Calu3 (cell line): ENCODE measurements at regions of chr14 and their contacts with region 1.

Region 1: GRCh38 chr14:98974082-98974481 is 297.9 kb downstream of the BCL11B start:
- DNase-seq: peak; percentile 50
- H3K4me3 Mint-ChIP-seq: no peak overlapping the region
- H3K27ac Mint-ChIP-seq: peak overlapping the region; percentile 68
- H3K4me1 Mint-ChIP-seq: peaks cover 26% of the 10 kb centered on the region
- H3K27me3 Mint-ChIP-seq: no peaks in the 10 kb centered on the region
- CTCF ChIP-seq: no peak

Region 2: DNA sequence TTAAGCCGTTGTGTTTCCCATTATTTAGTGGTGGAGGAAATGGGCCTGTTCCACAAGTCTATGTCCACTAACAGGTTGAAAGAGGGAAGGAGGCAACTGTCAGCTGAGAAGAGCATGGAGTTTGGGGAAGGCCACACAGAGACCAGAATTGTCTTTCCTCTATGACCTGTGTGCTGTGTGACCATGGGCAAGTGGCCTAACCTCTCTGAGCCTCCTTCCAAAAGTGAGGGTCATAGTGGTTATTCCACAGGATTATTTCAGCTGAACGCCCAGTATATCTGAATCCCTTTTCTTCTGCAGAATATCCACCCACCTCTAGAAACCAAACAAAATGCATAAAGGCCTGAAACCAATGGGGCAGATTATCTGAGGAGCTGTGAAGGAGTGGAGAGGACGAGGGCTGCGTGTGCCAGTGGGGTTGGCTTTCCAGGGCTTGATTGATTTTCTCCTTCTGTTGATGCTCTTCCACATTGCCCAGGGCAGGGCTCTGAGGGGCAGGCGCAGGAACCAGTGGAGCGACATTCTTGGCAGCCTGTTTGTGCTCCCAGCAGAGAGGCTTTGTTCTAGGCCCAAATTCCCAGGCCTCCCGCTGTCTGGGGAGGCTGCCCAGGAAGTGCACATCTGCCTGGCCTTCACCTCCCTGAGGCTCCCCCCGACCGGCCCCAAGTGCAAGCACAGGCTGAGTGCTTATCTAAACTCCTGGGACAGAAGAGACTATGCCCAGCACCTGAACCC is 154.8 kb before region 1 on chr14:
- CTCF ChIA-PET with region 1: no interaction called
- intact Hi-C with region 1: loop called (anchors 5 kb)
- DNase-seq: peak; percentile 78
- H3K4me3 Mint-ChIP-seq: peak overlapping the region; percentile 5
- H3K27ac Mint-ChIP-seq: peak overlapping the region; percentile 61
- H3K4me1 Mint-ChIP-seq: peaks cover 29% of the 10 kb centered on the region
- H3K27me3 Mint-ChIP-seq: peaks cover 23% of the 10 kb centered on the region
- CTCF ChIP-seq: no peak

Region 3: DNA sequence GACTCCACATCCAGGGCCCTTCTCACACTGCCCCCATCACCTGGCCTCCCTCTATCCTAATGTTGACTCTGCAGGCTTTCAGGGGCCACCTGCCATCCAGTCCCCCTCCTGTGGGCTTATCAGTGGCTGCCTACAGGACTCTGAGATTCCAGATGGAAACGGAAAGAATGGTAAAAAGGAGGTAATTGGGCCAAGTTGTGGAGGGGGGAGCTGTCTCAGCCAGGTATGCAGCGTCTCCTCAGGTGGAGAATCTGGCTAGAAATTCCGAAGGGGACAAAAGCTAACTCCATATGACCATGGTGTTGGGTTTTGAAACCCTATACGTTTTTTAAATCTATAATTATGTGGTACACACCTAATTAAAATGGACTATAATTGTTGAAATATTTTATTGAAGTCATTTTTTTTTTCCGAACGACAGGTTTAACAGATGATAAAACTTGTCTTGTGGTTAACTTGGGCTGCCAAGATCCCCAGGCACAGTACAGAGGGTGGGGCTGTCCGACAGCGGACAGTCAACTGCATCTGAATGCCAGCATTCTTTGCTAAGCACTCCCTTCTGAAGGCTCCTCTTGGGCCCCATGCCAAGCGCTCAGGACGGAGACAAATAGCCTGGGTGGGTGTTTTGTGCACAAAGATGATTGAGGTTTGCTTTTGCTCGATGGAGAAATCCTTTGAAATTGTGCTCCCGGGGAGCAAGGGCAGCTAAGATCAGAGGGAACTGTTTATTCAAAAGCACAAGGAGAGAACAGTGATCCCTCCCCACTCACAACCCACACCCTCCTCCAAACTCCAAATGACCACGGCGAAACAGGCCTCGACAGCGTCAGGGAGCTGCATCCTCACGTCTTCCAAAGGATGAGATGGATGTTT is 67.7 kb before region 1 on chr14:
- CTCF ChIA-PET with region 1: interaction called, 6 read pairs
- intact Hi-C with region 1: loop called (anchors 5 kb)
- DNase-seq: peak; percentile 67
- H3K4me3 Mint-ChIP-seq: no peak overlapping the region
- H3K27ac Mint-ChIP-seq: no peak overlapping the region
- H3K4me1 Mint-ChIP-seq: peaks cover 32% of the 10 kb centered on the region
- H3K27me3 Mint-ChIP-seq: peaks cover 21% of the 10 kb centered on the region
- CTCF ChIP-seq: no peak

Region 4: DNA sequence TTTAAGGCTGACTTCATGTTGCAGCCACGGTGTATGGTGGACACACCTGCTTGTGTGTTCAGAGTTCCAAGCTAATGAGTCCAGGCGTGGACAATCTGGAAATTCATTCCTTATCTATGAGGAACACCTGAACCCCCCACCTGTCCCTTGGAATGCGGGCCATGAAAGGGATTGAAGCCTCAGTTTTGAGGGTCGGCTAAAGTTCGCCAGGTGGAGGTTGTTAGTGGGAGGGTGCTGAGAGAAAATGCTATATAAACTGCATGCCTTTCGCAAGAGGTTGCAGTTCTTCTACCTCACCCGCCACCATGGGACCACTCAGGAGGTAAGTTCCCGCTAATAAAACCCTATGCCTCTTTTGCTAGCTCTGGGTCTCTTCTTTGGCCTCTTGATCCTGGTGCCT is 50.0 kb before region 1 on chr14:
- CTCF ChIA-PET with region 1: no interaction called
- intact Hi-C with region 1: loop called (anchors 1 kb)
- DNase-seq: no peak
- H3K4me3 Mint-ChIP-seq: no peak overlapping the region
- H3K27ac Mint-ChIP-seq: no peak overlapping the region
- H3K4me1 Mint-ChIP-seq: no peaks in the 10 kb centered on the region
- H3K27me3 Mint-ChIP-seq: peaks cover 50% of the 10 kb centered on the region
- CTCF ChIP-seq: no peak

Region 5: GRCh38 chr14:98993818-98994217 is 19.7 kb after region 1 on chr14:
- CTCF ChIA-PET with region 1: no interaction called
- intact Hi-C with region 1: no loop called
- DNase-seq: no peak
- H3K4me3 Mint-ChIP-seq: no peak overlapping the region
- H3K27ac Mint-ChIP-seq: no peak overlapping the region
- H3K4me1 Mint-ChIP-seq: peaks cover 11% of the 10 kb centered on the region
- H3K27me3 Mint-ChIP-seq: peaks cover 14% of the 10 kb centered on the region
- CTCF ChIP-seq: no peak

Region 6: DNA sequence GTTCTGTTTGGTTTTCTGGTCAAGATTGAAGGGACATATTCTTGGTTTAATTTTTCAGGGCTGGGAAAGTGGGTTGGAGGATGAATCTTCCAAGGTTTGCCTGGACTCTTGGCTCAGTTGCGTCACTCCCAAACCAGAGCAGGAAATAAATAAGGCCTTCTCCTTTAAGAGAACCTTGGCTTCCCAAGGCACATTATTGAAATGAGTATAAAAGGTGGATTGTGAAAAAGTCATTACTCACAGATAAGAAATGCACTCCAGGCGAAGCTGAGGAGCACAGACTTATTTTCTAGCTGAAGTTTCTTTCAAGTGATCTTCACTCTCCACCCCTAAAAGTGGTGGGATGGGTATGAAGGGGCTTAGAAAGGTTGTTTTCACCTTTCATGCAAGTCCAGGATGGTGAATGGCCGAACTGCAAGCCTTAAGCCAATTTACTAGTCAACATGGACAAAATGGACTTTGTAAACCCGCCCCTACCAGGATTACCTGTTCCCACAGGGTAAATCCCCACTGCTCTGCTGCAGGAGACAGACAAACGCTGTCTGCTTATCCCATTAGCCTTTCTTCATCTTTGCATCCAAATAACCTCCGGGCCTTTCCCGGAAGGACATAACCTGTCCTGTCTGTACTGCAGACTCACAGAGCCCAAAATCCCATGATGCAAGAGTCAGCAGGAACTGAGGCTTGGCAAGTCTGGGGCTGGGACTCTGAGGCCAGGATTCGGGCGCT is 90.3 kb after region 1 on chr14:
- CTCF ChIA-PET with region 1: no interaction called
- intact Hi-C with region 1: loop called (anchors 10 kb)
- DNase-seq: peak; percentile 32
- H3K4me3 Mint-ChIP-seq: peak overlapping the region; percentile 58
- H3K27ac Mint-ChIP-seq: peak overlapping the region; percentile 91
- H3K4me1 Mint-ChIP-seq: peaks cover 35% of the 10 kb centered on the region
- H3K27me3 Mint-ChIP-seq: no peaks in the 10 kb centered on the region
- CTCF ChIP-seq: no peak

Region 7: DNA sequence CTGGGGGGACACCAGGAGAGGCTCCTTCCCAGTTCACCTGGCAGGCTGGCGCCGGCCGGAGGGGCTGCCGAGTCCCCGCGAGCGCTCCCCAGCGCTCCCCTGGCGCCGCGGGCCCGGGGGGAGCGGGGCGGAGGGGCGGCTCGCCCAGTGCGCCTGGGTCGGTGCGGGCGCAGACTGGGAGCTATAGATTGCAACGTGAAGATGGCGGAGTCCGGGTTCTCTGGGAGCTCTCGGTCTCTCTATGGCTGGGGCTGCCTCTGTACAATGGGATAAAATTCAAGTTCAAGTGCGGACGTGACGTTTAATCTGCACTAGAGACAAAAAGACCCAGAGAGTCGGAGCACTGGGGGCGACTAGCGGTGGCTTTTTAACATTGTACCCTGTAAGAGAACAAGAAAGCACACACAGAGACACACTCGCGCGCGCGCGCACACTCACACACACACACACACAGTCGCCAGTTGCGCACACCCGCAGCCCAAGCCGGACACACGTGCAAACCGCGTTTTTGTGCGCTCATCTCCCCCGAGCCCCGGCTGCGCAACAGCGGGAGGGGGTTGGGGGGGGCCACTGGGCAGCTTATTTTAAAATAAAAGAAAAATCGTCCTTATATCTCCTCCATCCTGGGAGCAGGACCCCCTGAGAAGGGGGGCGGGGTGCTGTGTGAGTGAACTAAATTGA is 298.0 kb after region 1 on chr14 and contains the start of gene BCL11B:
- CTCF ChIA-PET with region 1: no interaction called
- intact Hi-C with region 1: loop called (anchors 10 kb)
- DNase-seq: peak; percentile 70
- H3K4me3 Mint-ChIP-seq: peak within 1 kb of the TSS; percentile 70
- H3K27ac Mint-ChIP-seq: no peak within 1 kb of the TSS
- H3K4me1 Mint-ChIP-seq: peaks cover 23% of the 10 kb centered on the region
- H3K27me3 Mint-ChIP-seq: peaks cover 93% of the 10 kb centered on the region
- CTCF ChIP-seq: peak; percentile 48
- total RNA-seq, gene BCL11B: 0.24 and 0.59 TPM in 2 replicates